PC-9 (cell line): ENCODE measurements at regions of chr13 and their contacts with region 1.

Region 1: GRCh38 chr13:68007578-68007977 is 777.4 kb upstream of the PCDH9 start:
- DNase-seq: no peak
- H3K4me3 ChIP-seq: no peak overlapping the region
- H3K27ac ChIP-seq: no peak overlapping the region
- H3K4me1 ChIP-seq: no peaks in the 10 kb centered on the region
- H3K27me3 ChIP-seq: no peaks in the 10 kb centered on the region
- CTCF ChIP-seq: no peak

Region 2: DNA sequence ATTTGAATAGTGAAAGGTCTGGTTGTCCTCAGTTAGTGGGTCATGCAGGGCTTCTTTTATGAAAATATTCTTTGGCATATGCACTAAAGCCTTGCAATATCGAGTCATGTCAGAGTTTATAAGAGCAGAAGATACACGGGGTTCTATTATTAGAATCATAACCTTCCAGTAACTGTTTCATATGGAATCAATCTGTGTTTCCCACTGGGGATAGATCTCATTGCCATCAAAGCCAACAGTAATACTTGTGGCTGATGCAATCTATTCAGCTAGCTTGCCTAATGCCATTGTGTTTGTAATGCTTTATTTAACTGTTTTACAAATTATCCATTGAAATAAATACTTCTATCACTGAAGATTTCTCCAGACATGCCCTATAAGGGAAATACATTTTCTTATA is 30.5 kb before region 1 on chr13:
- CTCF ChIA-PET with region 1: no interaction called
- POLR2A ChIA-PET with region 1: no interaction called
- intact Hi-C with region 1: loop called (anchors 1 kb)
- DNase-seq: no peak
- H3K4me3 ChIP-seq: no peak overlapping the region
- H3K27ac ChIP-seq: no peak overlapping the region
- H3K4me1 ChIP-seq: no peaks in the 10 kb centered on the region
- H3K27me3 ChIP-seq: no peaks in the 10 kb centered on the region
- CTCF ChIP-seq: no peak